ENCODE measurements at regions of chr19 and their contacts with region 1.

Region 1: GRCh38 chr19:45798995-45799517 is 6.4 kb upstream of the DMWD start:
- DNase-seq: no peak
- ATAC-seq: peak; percentile 82
- H3K4me3 ChIP-seq: no peak overlapping the region
- H3K27ac ChIP-seq: no peak overlapping the region
- H3K4me1 ChIP-seq: peaks cover 4% of the 10 kb centered on the region; the same call in 1 of the 2 replicates
- H3K27me3 ChIP-seq: no peaks in the 10 kb centered on the region
- CTCF ChIP-seq: peak; percentile 82

Region 2: GRCh38 chr19:45782820-45783785 is 16.0 kb before region 1 on chr19:
- CTCF ChIA-PET with region 1: interaction called, 10 read pairs
- POLR2A ChIA-PET with region 1: no interaction called
- in situ Hi-C with region 1: no loop called
- intact Hi-C with region 1: no loop called
- DNase-seq: no peak
- ATAC-seq: peak; percentile 24
- H3K4me3 ChIP-seq: 0 out of 4 replicates have a peak overlapping the region, but pooled peaks of 1 of the 2 experiments have one; percentile 24
- H3K27ac ChIP-seq: peak overlapping the region; percentile 87
- H3K4me1 ChIP-seq: peaks cover 25% of the 10 kb centered on the region
- H3K27me3 ChIP-seq: no peaks in the 10 kb centered on the region
- CTCF ChIP-seq: no peak

Measured in Panc1 (cell line).